Activated CD4-positive, alpha-beta T cell treated with anti-CD3 and anti-CD28 coated beads for 36 hours (primary cell): ENCODE measurements at regions of chr17 and their contacts with region 1.

Region 1: DNA sequence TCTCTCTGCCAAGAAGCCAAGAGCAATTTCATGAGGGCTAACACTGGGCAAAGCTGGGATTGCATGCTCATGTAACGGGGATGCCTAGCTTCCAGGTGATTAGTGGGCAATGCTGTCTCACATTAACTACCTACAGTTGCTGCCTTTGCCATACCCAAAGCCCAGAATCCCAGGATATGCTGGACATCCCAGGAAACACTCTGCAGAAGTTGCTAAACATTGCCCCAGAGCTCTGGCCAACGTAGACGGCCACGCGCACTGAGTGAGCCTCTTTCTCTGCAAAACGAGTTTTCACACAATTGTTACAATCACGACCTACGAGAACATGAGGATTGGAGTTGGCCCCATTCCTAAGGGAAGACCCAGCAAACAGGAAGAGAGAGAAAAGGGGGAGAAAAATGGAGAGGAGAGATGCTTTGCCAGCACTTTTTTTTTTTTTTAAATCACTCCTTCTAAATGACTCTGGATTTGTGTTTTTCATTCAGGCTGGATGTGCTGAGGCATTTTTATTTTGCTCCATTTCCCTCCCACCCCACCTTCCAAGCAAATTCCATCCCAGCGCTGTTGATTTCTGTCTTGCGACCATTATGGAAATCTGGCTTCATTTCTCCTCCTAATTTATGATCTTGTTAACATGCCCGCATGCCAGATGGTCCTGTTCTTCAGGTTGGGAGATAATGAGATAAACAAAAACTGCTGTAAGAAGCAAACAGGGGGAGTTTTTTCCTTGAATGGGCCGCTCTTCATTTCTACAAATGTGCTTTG is 112.8 kb upstream of the DNAH9 start:
- DNase-seq: no peak
- ATAC-seq: no peak
- H3K4me3 Mint-ChIP-seq: no peak overlapping the region
- H3K27ac Mint-ChIP-seq: no peak overlapping the region
- H3K4me1 Mint-ChIP-seq: no peaks in the 10 kb centered on the region
- H3K27me3 Mint-ChIP-seq: no peaks in the 10 kb centered on the region

Region 2: DNA sequence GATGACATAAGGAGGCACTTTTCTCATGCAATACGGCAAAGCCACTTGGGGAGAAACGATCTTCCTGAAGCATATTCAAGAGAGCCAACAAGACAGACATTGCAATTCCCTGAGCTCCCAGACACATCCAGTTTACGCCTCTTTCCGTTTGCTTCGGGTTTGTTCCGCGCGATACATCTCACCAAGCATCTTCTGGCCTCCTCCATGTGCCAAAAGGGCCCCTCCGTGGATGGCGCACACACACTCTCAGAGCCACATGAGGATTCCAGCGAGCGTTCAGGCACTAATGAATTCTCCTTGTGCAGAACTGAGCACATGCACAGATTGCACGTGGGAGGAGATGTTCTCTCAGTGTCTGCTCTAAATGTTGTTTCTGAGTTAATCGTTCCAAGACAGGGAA is 391.2 kb before region 1 on chr17:
- CTCF ChIA-PET with region 1: no interaction called
- POLR2A ChIA-PET with region 1: no interaction called
- intact Hi-C with region 1: no loop called
- DNase-seq: no peak
- ATAC-seq: no peak
- H3K4me3 Mint-ChIP-seq: no peak overlapping the region
- H3K27ac Mint-ChIP-seq: no peak overlapping the region
- H3K4me1 Mint-ChIP-seq: no peaks in the 10 kb centered on the region
- H3K27me3 Mint-ChIP-seq: no peaks in the 10 kb centered on the region

Region 3: GRCh38 chr17:11369575-11369974 is 115.9 kb before region 1 on chr17:
- CTCF ChIA-PET with region 1: no interaction called
- POLR2A ChIA-PET with region 1: no interaction called
- intact Hi-C with region 1: no loop called
- DNase-seq: no peak
- ATAC-seq: no peak
- H3K4me3 Mint-ChIP-seq: no peak overlapping the region
- H3K27ac Mint-ChIP-seq: no peak overlapping the region
- H3K4me1 Mint-ChIP-seq: no peaks in the 10 kb centered on the region
- H3K27me3 Mint-ChIP-seq: no peaks in the 10 kb centered on the region

Region 4: GRCh38 chr17:11535231-11535630 is 49.7 kb after region 1 on chr17:
- CTCF ChIA-PET with region 1: no interaction called
- POLR2A ChIA-PET with region 1: no interaction called
- intact Hi-C with region 1: loop called in 1 of 2 experiments (anchors 5 kb)
- DNase-seq: no peak
- ATAC-seq: no peak
- H3K4me3 Mint-ChIP-seq: no peak overlapping the region
- H3K27ac Mint-ChIP-seq: no peak overlapping the region
- H3K4me1 Mint-ChIP-seq: no peaks in the 10 kb centered on the region
- H3K27me3 Mint-ChIP-seq: no peaks in the 10 kb centered on the region

Region 5: DNA sequence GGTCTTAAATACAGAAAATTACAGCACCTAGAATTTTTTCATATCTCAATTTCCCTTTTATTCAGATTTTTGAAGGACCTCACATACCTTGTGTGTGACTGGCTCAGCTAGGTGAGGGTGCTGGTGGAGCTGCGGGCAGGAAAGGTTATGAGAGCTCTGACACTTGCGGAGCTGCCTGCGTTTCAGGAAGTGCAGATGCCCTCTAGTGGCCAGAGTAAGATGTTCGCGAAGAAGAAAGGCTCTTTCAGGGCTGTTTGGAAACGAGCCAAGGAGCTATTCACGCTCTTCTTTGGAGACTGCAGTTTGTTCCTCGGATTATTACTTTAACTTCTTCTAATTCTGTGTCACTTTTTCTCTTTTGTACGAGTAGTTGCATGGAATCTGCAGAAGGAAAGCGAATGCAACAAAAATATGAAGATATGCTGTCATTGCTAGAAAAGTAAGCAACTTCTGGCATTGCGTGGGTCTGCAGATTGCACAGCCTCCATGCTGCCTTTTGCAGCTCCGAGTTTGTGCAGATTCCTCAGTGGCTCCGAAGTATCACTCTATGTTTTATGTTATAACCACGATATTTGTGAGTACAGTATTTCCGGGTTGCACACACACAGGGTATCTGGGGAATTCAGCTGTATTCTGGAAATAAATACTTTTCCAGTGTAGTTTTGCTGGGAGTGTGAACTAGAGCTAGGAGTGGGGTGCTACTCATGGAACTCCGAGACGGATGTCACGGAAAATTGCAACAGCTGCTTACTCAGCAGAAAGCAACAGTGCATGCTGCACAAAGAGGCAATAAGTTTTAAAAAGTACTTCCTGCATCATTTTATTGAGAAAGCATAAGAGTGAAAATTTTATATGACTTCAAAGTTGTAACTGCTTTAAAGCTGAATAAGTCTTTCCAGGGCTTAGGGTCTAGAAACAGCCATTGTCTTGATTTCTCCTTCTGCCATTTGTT is 159.0 kb after region 1 on chr17:
- CTCF ChIA-PET with region 1: no interaction called
- POLR2A ChIA-PET with region 1: no interaction called
- intact Hi-C with region 1: no loop called
- DNase-seq: peak; percentile 64
- ATAC-seq: peak; percentile 42
- H3K4me3 Mint-ChIP-seq: no peak overlapping the region
- H3K27ac Mint-ChIP-seq: no peak overlapping the region
- H3K4me1 Mint-ChIP-seq: no peaks in the 10 kb centered on the region
- H3K27me3 Mint-ChIP-seq: no peaks in the 10 kb centered on the region

Region 6: GRCh38 chr17:12402963-12403622 is 917.6 kb after region 1 on chr17:
- CTCF ChIA-PET with region 1: no interaction called
- POLR2A ChIA-PET with region 1: no interaction called
- intact Hi-C with region 1: no loop called
- DNase-seq: no peak
- ATAC-seq: no peak
- H3K4me3 Mint-ChIP-seq: no peak overlapping the region
- H3K27ac Mint-ChIP-seq: no peak overlapping the region
- H3K4me1 Mint-ChIP-seq: no peaks in the 10 kb centered on the region
- H3K27me3 Mint-ChIP-seq: no peaks in the 10 kb centered on the region